ENCODE measurements at regions of chr7 and their contacts with region 1.

Region 1: GRCh38 chr7:94449148-94449725 is 54.5 kb downstream of the COL1A2 start:
- DNase-seq: no peak
- ATAC-seq: no peak
- H3K4me3 ChIP-seq: no peak overlapping the region
- H3K27ac ChIP-seq: no peak overlapping the region
- H3K4me1 ChIP-seq: no peaks in the 10 kb centered on the region
- H3K27me3 ChIP-seq: no peaks in the 10 kb centered on the region

Region 2: GRCh38 chr7:94529516-94529915 is 80.3 kb after region 1 on chr7:
- intact Hi-C with region 1: no loop called
- DNase-seq: no peak
- ATAC-seq: no peak
- H3K4me3 ChIP-seq: no peak overlapping the region
- H3K27ac ChIP-seq: no peak overlapping the region
- H3K4me1 ChIP-seq: peaks cover 0 to 2% of the 10 kb centered on the region in 2 donors
- H3K27me3 ChIP-seq: no peaks in the 10 kb centered on the region

Region 3: GRCh38 chr7:94547126-94547525 is 97.9 kb after region 1 on chr7:
- intact Hi-C with region 1: no loop called
- DNase-seq: no peak
- ATAC-seq: no peak
- H3K4me3 ChIP-seq: no peak overlapping the region
- H3K27ac ChIP-seq: no peak overlapping the region
- H3K4me1 ChIP-seq: no peaks in the 10 kb centered on the region
- H3K27me3 ChIP-seq: no peaks in the 10 kb centered on the region

Region 4: DNA sequence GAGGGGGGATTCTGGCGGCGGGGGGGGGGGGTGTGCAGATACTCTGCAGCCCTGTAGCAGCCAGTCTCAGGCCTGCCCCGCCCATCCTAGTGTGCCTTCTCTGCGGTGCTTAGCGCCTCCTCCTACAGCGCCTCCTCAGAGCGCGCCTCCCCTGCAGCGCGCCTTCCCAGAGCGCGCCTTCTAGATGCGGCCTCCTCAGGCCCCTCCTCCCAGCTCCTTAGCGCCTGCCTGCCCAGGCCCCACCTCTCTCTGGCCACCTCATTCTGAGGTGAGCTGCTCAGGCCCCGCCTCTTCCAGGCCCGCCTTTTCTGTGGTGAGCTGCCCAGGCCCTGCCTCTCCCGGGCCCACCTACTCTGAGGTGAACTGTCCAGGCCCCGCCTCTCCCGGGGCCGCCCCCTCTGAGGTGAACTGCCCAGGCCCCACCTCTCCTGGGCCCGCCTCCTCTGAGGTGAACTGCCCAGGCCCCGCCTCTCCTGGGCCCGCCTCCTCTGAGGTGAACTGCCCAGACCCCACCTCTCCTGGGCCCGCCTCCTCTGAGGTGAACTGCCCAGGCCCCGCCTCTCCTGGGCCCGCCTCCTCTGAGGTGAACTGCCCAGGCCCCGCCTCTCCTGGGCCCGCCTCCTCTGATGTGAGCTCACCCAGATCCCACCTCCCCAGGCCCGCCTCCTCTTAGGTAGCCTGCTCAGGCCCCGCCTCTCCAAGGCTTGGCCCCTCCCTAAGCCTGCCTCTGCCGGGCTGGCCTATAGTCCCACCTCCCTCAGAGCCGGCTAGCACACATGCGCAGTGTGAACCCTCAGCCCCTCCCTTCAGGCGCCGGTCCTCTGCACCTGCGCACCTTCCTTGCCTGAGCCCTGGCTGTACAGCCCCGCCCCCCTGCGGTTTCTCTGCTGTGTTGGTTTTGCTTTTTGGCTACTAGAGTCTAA is 208.8 kb after region 1 on chr7:
- intact Hi-C with region 1: loop called in 1 of 2 experiments (anchors 5 kb)
- DNase-seq: peak; percentile 95
- ATAC-seq: peak; percentile 92
- H3K4me3 ChIP-seq: peak overlapping the region; percentile 9 to 10
- H3K27ac ChIP-seq: no peak overlapping the region
- H3K4me1 ChIP-seq: no peaks in the 10 kb centered on the region
- H3K27me3 ChIP-seq: no peaks in the 10 kb centered on the region

Region 5: GRCh38 chr7:95246831-95247370 is 797.7 kb after region 1 on chr7:
- intact Hi-C with region 1: loop called (anchors 5 to 10 kb)
- DNase-seq: no peak
- ATAC-seq: peak; percentile 77
- H3K4me3 ChIP-seq: no peak overlapping the region
- H3K27ac ChIP-seq: no peak overlapping the region
- H3K4me1 ChIP-seq: no peaks in the 10 kb centered on the region
- H3K27me3 ChIP-seq: no peaks in the 10 kb centered on the region

Region 6: GRCh38 chr7:95476904-95477594 is 1027.8 kb after region 1 on chr7:
- intact Hi-C with region 1: loop called in 1 of 2 experiments (anchors 5 kb)
- DNase-seq: peak in 1 of 2 donors; percentile 58
- ATAC-seq: peak; percentile 75
- H3K4me3 ChIP-seq: no peak overlapping the region
- H3K27ac ChIP-seq: no peak overlapping the region
- H3K4me1 ChIP-seq: no peaks in the 10 kb centered on the region
- H3K27me3 ChIP-seq: no peaks in the 10 kb centered on the region

Measured in aorta (tissue), 5 donors.